ENCODE measurements at regions of chr10 and their contacts with region 1.

Region 1: DNA sequence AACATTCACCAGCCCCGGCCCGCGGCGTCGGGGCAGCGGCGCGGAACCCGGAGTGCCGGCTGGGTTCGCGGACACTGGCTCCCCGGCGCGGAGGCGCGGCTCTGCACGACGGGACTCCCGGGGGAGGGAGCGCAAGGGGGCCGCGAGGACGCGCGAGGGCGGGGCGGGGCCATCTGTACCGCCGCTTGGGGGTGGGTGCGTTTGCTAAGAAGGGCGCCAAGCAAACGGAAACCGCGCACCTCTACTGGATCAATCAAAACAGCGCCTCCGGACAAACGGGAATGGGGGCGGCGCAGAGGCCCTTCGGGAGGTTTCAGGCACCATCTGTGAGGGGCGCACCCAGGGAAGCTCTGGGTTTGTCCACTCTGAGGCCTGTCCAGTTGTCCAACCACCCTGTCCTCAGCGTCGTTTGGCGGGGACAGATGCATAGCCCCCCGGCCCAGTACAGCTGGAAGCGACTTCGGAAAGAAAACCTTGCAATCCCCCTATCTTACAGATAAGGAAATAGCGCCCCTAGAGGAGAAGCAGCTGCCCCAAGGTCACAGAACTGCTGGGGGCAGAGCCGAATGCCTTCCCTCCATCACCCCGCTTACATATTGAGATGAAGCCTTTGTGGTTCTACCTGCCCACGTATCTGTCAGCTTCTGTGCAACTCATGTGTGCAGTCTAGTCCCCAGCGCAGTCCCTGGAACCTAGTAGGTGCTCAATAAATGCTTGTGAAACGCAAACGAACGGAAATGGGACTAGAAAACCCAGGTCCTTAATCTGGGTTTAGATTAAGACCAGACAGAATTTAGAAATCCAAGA is 10.7 kb upstream of the SLIT1 start:
- DNase-seq: peak; percentile 65
- H3K4me3 Mint-ChIP-seq: peak overlapping the region; percentile 68
- H3K27ac Mint-ChIP-seq: no peak overlapping the region
- H3K4me1 Mint-ChIP-seq: peaks cover 19% of the 10 kb centered on the region
- H3K27me3 Mint-ChIP-seq: peaks cover 47% of the 10 kb centered on the region

Region 2: DNA sequence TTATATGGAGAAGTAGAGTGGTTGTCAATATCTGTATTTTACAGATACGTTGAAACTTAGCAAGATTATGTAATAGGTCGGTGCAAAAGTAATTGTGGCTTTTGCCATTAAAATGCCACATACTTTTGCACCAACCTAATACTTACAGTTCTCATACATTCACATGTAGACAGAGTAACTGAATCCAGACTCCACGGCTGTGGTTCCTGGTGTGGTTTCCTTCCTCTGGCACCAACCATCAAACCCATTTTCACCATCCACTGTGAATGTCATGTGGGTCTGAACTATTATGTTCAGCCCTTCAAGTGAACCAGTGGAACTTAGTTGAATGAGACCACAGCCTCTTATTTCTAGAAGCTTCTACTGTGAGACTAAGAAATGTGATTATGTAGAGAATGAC is 20.9 kb after region 1 on chr10:
- CTCF ChIA-PET with region 1: interaction called, 111 read pairs
- POLR2A ChIA-PET with region 1: no interaction called
- DNase-seq: no peak
- H3K4me3 Mint-ChIP-seq: no peak overlapping the region
- H3K27ac Mint-ChIP-seq: peak overlapping the region; percentile 65
- H3K4me1 Mint-ChIP-seq: peaks cover 36% of the 10 kb centered on the region
- H3K27me3 Mint-ChIP-seq: no peaks in the 10 kb centered on the region